Activated naive CD4-positive, alpha-beta T cell treated with anti-CD3 and anti-CD28 coated beads for 36 hours (primary cell): ENCODE measurements at regions of chr1 and their contacts with region 1.

Region 1: DNA sequence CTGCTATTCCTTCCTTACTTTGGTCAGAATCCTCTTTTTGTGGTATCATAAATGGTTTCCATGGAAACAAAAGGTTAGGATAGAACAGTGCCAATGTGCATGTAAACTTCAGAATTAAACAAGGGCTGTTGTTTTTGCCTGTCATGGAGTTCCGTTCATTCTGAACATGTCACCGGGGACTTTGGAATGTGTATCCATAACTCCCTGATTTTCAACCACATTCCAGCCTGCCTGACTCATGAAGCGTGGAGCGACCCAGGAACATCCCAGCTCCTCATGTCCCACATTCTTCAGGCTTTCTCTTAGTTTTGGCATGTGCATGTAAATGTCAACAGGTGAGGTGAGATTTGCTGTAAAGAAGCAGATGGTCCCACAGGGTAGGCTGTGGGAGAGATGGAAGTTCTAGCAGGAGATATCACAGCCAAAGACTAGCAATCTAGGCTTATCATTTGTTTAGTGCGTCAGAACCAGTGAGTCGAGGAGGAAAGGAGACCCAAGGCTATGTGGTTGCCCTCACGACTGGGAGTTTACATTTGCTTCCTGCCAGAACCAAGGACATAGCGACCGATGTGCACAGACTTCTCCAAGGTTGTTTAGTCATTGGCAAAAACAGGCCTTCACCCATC is 23.0 kb upstream of the DNAJC11 start:
- DNase-seq: no peak
- H3K4me3 Mint-ChIP-seq: no peak overlapping the region
- H3K27ac Mint-ChIP-seq: no peak overlapping the region
- H3K4me1 Mint-ChIP-seq: no peaks in the 10 kb centered on the region
- H3K27me3 Mint-ChIP-seq: peaks cover 3% of the 10 kb centered on the region

Region 2: GRCh38 chr1:6889875-6890480 is 165.3 kb after region 1 on chr1:
- CTCF ChIA-PET with region 1: interaction called, 7 read pairs
- intact Hi-C with region 1: loop called (anchors 1 kb)
- DNase-seq: peak; percentile 58
- H3K4me3 Mint-ChIP-seq: no peak overlapping the region
- H3K27ac Mint-ChIP-seq: no peak overlapping the region
- H3K4me1 Mint-ChIP-seq: peaks cover 3% of the 10 kb centered on the region
- H3K27me3 Mint-ChIP-seq: no peaks in the 10 kb centered on the region

Region 3: GRCh38 chr1:7070389-7071029 is 345.9 kb after region 1 on chr1:
- CTCF ChIA-PET with region 1: interaction called, 6 read pairs
- intact Hi-C with region 1: loop called (anchors 1 kb)
- DNase-seq: peak; percentile 72
- H3K4me3 Mint-ChIP-seq: no peak overlapping the region
- H3K27ac Mint-ChIP-seq: no peak overlapping the region
- H3K4me1 Mint-ChIP-seq: peaks cover 2% of the 10 kb centered on the region
- H3K27me3 Mint-ChIP-seq: peaks cover 28% of the 10 kb centered on the region

Region 4: GRCh38 chr1:7218210-7218832 is 493.7 kb after region 1 on chr1:
- CTCF ChIA-PET with region 1: no interaction called
- intact Hi-C with region 1: loop called (anchors 5 kb)
- DNase-seq: peak; percentile 57
- H3K4me3 Mint-ChIP-seq: no peak overlapping the region
- H3K27ac Mint-ChIP-seq: no peak overlapping the region
- H3K4me1 Mint-ChIP-seq: peaks cover 2% of the 10 kb centered on the region
- H3K27me3 Mint-ChIP-seq: peaks cover 24% of the 10 kb centered on the region